Activated T-helper 2 cell treated with anti-CD3 and anti-CD28 coated beads, Interferon-gamma antibody, Interleukin-2, Interleukin-4, amounts not matched to agents 10 μg/mL and 5 μg/mL and 100 μg/mL, durations not matched to agents 14 hours and 24 hours and 36 hours (primary cell): ENCODE measurements at regions of chr10 and their contacts with region 1.

Region 1: DNA sequence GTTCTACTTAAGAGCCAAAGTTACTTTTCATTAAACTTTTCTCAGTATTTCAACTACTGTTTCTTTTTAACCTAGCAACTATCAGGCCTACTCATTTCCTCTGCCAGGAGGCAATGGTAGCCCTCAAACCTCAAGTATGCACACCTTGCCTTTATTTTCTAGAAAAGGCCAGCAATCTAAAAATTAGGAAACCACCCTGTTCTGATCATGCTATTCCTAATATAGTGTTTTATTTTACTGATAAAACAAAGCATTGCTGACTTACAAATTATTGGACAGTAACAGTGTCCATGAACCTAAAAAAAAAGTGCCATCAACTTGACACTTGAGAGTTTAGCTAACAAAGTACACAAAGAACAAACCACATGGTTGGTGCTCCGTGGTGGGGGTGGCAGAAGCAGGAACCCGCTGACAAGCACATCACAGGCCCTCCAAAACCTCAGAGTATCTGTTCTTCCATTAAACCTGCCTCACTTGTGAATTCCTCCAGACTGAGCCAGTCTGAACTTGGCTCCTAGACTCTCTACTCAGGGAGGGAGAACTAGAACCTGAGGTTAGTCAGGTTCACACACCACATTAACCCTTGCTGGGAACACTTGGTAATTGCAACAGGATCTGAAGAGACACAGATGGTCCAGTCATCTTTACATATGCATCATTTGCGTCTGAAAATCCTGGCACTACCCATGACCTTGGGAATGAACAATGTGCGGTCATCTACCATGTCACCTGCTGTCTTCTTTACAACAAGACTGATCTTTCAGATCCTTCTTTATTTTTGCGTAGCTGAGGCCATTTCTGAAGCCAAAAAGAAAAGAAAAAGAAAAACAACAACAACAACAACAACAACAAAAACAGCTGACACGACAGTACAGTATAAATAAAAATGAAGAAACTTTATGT is 31.9 kb downstream of the PIP4K2A start:
- DNase-seq: peak; percentile 58
- H3K4me3 Mint-ChIP-seq: peak overlapping the region; percentile 69
- H3K27ac Mint-ChIP-seq: peak overlapping the region; percentile 98
- H3K4me1 Mint-ChIP-seq: peaks cover 83% of the 10 kb centered on the region
- H3K27me3 Mint-ChIP-seq: no peaks in the 10 kb centered on the region

Region 2: GRCh38 chr10:22245567-22245966 is 436.9 kb before region 1 on chr10:
- intact Hi-C with region 1: loop called (anchors 5 kb)
- DNase-seq: no peak
- H3K4me3 Mint-ChIP-seq: no peak overlapping the region
- H3K27ac Mint-ChIP-seq: peak overlapping the region; percentile 59
- H3K4me1 Mint-ChIP-seq: peaks cover 42% of the 10 kb centered on the region
- H3K27me3 Mint-ChIP-seq: peaks cover 3% of the 10 kb centered on the region

Region 3: DNA sequence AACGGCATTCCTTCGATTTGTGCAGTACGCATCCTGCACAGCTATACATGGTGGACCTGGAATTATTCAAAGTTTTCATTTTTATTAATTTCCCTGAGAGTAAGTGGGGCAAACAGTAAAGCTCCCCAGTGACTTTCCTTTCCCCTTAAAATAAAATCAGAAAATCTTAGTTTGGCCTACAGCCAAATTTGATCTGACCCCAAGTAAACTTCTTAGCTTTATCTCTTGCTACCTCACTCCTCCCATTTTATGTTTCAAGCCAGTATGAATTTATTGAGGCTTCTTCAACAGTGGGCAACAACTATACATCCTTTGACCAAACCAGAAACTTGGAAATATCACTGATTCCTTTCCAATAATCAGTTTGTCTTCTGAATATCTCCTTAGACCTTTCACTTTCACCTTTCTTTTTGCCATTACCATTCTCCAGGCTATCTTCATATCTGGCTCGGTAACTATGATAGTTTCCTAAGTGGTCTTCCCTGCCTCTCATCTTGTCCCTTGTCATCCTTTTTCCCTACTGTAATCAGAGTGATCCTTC is 326.1 kb before region 1 on chr10:
- intact Hi-C with region 1: no loop called
- DNase-seq: no peak
- H3K4me3 Mint-ChIP-seq: no peak overlapping the region
- H3K27ac Mint-ChIP-seq: no peak overlapping the region
- H3K4me1 Mint-ChIP-seq: peaks cover 5% of the 10 kb centered on the region
- H3K27me3 Mint-ChIP-seq: peaks cover 21% of the 10 kb centered on the region

Region 4: GRCh38 chr10:22573820-22574569 is 108.5 kb before region 1 on chr10:
- intact Hi-C with region 1: loop called (anchors 1 kb)
- DNase-seq: no peak
- H3K4me3 Mint-ChIP-seq: no peak overlapping the region
- H3K27ac Mint-ChIP-seq: peak overlapping the region; percentile 22
- H3K4me1 Mint-ChIP-seq: peaks cover 33% of the 10 kb centered on the region
- H3K27me3 Mint-ChIP-seq: no peaks in the 10 kb centered on the region

Region 5: DNA sequence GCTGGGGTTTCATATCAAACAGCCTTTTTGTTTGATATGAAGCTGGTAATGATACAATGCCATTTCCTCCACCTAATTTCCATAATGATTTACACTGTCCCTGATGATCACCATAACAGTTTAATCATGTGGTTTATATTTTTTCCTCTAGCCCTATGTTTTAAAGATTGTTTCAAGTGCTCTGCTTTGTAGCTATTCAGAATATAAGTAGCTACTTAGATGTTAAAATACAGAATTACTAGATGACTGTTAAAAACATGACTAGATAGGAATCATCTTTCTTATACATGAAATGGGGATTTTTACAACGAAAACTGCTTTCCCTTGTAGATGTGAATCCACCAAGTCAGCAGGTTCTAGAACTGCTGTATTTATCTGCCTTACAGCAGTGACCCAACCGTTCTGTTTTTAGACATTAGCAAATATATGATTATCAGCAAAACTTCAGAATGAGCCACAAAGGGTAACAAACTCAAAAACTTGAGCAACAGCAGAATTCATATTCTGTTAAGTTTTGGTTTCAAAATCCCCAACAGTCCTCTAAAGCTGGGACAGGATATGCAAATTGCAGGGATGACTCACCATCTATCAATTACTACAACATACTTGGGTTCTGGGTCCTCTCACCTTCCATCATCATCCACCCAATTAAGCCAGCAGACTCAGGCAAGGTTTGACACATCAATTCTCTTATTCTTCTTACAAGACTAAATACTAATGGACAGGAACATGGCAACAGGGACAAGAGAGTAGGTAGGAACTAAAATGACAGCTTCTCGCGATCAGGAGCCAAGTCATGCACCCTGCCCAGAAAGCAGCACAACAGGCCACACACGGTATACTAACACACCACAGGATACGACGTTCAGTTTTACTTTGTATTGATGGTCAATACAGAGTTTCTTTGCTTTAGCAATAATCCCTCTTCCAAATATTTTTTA is 52.0 kb before region 1 on chr10:
- intact Hi-C with region 1: loop called (anchors 1 kb)
- DNase-seq: peak; percentile 41
- H3K4me3 Mint-ChIP-seq: peak overlapping the region; percentile 70
- H3K27ac Mint-ChIP-seq: peak overlapping the region; percentile 95
- H3K4me1 Mint-ChIP-seq: peaks cover 87% of the 10 kb centered on the region
- H3K27me3 Mint-ChIP-seq: no peaks in the 10 kb centered on the region

Region 6: GRCh38 chr10:22655311-22655981 is 27.0 kb before region 1 on chr10:
- intact Hi-C with region 1: loop called (anchors 1 kb)
- DNase-seq: no peak
- H3K4me3 Mint-ChIP-seq: peak overlapping the region; percentile 49
- H3K27ac Mint-ChIP-seq: peak overlapping the region; percentile 85
- H3K4me1 Mint-ChIP-seq: peaks cover 83% of the 10 kb centered on the region
- H3K27me3 Mint-ChIP-seq: no peaks in the 10 kb centered on the region

Region 7: GRCh38 chr10:22693371-22693784 is 10.9 kb after region 1 on chr10:
- intact Hi-C with region 1: loop called (anchors 1 kb)
- DNase-seq: no peak
- H3K4me3 Mint-ChIP-seq: peak overlapping the region; percentile 73
- H3K27ac Mint-ChIP-seq: peak overlapping the region; percentile 93
- H3K4me1 Mint-ChIP-seq: peaks cover 69% of the 10 kb centered on the region
- H3K27me3 Mint-ChIP-seq: no peaks in the 10 kb centered on the region

Region 8: DNA sequence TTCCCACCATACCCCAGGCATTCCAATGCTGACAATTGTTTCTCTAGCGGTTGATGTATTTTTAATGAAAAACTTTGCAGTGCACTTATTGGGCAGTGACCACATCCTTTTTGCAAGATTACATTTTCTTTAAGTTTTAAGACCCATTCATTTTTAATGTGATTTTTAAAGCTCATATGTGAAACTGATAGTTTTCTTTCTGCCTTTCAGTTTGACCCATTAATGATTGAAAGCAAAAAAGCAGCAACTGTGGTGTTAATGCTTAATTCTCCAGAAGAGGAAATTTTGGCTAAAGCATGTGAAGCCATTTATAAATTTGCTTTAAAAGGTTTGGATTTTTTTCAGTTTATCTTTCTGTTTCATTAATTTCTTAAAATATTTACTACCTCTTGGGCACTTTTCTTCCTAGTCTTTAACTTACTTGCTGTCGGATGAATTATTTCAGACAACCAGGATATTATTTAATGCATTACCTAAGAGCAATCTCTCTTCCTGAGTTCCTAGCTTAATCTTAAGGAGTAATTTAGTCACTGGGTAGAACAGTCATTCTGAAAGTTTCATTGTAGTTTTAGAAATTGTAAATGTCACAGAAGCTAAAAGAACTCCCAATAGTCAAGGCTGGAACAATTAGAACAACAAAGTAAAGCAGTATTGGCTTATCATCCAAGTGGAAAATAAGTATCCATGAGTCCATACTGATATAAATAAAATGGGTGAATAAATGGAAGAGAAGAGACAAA is 263.6 kb after region 1 on chr10:
- intact Hi-C with region 1: no loop called
- DNase-seq: no peak
- H3K4me3 Mint-ChIP-seq: no peak overlapping the region
- H3K27ac Mint-ChIP-seq: no peak overlapping the region
- H3K4me1 Mint-ChIP-seq: peaks cover 9% of the 10 kb centered on the region
- H3K27me3 Mint-ChIP-seq: peaks cover 9% of the 10 kb centered on the region

Region 9: GRCh38 chr10:22988581-22989360 is 306.3 kb after region 1 on chr10:
- intact Hi-C with region 1: loop called (anchors 10 kb)
- DNase-seq: peak; percentile 47
- H3K4me3 Mint-ChIP-seq: no peak overlapping the region
- H3K27ac Mint-ChIP-seq: no peak overlapping the region
- H3K4me1 Mint-ChIP-seq: peaks cover 14% of the 10 kb centered on the region
- H3K27me3 Mint-ChIP-seq: peaks cover 16% of the 10 kb centered on the region